ENCODE measurements at regions of chr5 and their contacts with region 1.

Region 1: DNA sequence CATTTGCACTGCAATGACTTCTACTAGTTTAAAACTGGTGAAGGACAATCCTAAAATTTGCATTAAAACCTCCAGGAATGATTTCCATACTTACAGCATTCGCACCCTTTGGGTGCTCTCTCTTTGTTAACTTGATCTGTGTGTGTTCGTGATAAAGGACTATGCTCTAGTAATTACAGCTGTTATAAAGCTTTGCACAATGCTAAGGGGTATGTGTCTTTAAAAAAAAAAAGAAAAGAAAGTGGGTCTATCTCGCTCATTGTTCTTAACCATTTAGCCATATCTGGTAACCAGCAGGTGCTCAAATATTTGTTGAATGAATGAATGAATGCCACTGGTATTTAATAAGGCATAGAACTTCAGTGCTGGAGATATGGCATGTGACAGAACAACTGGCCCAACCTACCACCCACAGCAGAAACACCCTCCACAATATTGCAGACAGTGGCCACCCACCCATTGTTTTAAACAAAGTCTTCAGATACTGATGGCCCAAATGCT is 8.7 kb downstream of the TRIM36 start:
- DNase-seq: no peak
- H3K4me3 Mint-ChIP-seq: no peak overlapping the region
- H3K27ac Mint-ChIP-seq: no peak overlapping the region
- H3K4me1 Mint-ChIP-seq: no peaks in the 10 kb centered on the region
- H3K27me3 Mint-ChIP-seq: peaks cover 23% of the 10 kb centered on the region

Region 2: DNA sequence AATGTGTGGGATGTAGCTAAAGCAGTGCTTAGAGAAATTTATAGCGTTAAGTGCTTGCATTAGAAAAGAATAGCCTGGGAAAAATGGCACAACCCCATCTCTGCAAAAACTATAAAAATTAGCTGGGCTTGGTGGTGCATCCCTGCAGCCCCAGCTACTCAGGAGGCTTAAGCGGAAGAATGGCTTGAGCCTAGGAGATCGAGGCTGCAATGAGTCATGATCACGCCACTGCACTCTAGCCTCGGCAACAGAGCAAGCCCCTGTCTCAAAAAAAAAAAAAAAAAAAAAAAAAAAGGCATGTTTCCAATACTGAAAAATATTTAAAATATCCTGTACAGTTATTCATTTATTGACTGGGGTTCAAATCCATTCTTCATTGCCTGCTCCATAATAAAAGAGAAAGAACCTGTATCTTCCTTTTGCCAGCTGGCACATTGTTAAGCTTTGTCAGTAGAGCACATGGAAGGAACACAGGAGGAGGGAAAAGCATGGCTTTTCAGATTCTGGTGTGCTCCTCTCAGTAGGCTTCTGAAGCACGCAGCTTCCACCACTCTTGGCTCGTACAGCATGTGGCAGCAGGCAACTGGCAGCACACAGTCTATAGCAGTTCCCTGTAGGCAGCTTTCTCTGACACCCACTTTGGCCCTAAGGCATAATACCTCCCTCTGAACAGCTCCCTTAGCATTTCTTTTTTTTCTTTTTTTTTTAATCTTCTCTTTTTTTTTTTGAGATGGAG is 64.8 kb before region 1 on chr5:
- intact Hi-C with region 1: no loop called
- DNase-seq: no peak
- H3K4me3 Mint-ChIP-seq: no peak overlapping the region
- H3K27ac Mint-ChIP-seq: no peak overlapping the region
- H3K4me1 Mint-ChIP-seq: no peaks in the 10 kb centered on the region
- H3K27me3 Mint-ChIP-seq: peaks cover 33% of the 10 kb centered on the region

Region 3: DNA sequence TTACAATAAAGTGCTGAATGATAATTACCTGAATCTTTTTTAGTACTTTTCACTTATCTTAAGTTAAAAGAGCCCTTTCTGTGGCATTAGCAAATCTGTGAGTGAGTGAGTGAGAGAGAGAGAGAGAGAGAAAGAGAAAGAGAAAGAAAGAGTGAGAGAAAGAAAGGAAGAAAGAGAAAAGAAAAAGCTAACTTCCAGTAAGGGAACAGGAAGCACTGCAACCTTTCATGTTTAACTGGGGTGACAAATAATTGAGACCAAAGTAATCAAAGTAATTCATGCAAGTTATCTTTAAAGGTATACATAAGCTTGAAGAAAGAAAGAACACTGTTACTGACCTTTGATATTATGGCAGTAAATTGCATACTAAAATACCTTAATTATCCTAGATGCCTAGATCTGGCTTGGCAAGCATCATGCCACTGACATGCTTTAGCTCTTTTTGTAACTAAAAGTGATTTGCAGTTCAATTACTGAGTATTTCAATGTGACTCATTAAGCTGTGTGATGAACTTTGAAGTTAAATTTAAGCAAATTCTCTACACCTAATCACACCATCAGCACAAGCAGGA is 361.9 kb after region 1 on chr5:
- intact Hi-C with region 1: loop called (anchors 5 kb)
- DNase-seq: no peak
- H3K4me3 Mint-ChIP-seq: no peak overlapping the region
- H3K27ac Mint-ChIP-seq: no peak overlapping the region
- H3K4me1 Mint-ChIP-seq: peaks cover 25% of the 10 kb centered on the region
- H3K27me3 Mint-ChIP-seq: no peaks in the 10 kb centered on the region